CD4-positive, alpha-beta T cell (primary cell): ENCODE measurements at regions of chr13 and their contacts with region 1.

Region 1: GRCh38 chr13:21176220-21176982 is at the starts of genes MRPL57 and SKA3:
- DNase-seq: peak; percentile 87 to 98 (median 92)
- ATAC-seq: peak; percentile 98
- H3K4me3 ChIP-seq: peak within 1 kb of the TSS; percentile 100
- H3K4me3 Mint-ChIP-seq: peak within 1 kb of the TSS; percentile 90
- H3K27ac ChIP-seq: peak within 1 kb of the TSS; percentile 83 to 95
- H3K27ac Mint-ChIP-seq: peak within 1 kb of the TSS; percentile 96
- H3K4me1 ChIP-seq: peaks cover 22% of the 10 kb centered on the region
- H3K4me1 Mint-ChIP-seq: peaks cover 29% of the 10 kb centered on the region
- H3K27me3 ChIP-seq: no peaks in the 10 kb centered on the region
- H3K27me3 Mint-ChIP-seq: no peaks in the 10 kb centered on the region
- CTCF ChIP-seq: no peak
- total RNA-seq, gene MRPL57: 10.0 to 10.5 TPM
- total RNA-seq, gene SKA3: 0.30 TPM in 1 of 2 experiments, not detected in the other

Region 2: DNA sequence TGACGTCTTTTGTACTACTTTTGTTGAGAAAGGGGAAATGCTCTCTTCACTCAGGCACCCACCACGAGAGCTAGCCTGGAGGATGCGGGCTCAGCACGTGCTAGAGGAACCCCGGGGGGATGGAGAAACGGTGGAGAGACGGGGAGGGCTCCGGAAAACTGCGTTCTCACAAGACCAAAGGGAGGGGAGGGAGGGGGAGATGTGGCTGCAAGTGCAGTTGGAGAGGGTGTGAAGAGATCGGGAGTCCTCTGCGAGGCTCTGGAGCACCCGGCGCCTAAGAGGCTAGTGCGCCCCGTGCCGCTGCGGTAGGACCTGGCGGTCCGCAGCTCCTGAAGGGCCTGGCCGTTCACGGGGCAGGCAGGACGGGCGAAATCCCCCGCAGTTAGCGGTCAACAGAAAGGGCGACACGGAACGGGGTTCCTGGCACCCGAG is 230.4 kb before region 1 on chr13:
- CTCF ChIA-PET with region 1: no interaction called
- POLR2A ChIA-PET with region 1: no interaction called
- intact Hi-C with region 1: loop called (anchors 5 to 10 kb)
- DNase-seq: peak in 2 of 14 experiments; percentile 23
- ATAC-seq: peak; percentile 26
- H3K4me3 ChIP-seq: no peak overlapping the region
- H3K4me3 Mint-ChIP-seq: peak overlapping the region; percentile 65
- H3K27ac ChIP-seq: no peak overlapping the region
- H3K27ac Mint-ChIP-seq: no peak overlapping the region
- H3K4me1 ChIP-seq: peaks cover 7% of the 10 kb centered on the region
- H3K4me1 Mint-ChIP-seq: peaks cover 10% of the 10 kb centered on the region
- H3K27me3 ChIP-seq: peaks cover 5 to 10% of the 10 kb centered on the region in 2 experiments
- H3K27me3 Mint-ChIP-seq: peaks cover 62% of the 10 kb centered on the region
- CTCF ChIP-seq: no peak

Region 3: DNA sequence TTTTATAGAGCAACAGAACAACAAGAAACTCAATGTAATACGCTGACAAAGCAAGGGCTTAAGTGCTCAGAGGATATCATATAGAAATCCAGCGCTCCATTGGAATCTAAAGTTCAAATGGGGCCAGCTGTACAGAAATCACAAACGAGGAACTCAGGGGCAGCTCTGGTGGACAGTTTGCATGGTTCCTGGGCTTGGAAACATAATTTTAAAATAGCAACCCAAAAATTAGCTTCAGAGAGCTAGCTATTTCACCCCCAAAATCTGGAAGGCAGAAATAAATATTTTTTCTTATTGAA is 95.9 kb before region 1 on chr13:
- CTCF ChIA-PET with region 1: no interaction called
- POLR2A ChIA-PET with region 1: no interaction called
- intact Hi-C with region 1: no loop called
- DNase-seq: no peak
- ATAC-seq: no peak
- H3K4me3 ChIP-seq: no peak overlapping the region
- H3K4me3 Mint-ChIP-seq: no peak overlapping the region
- H3K27ac ChIP-seq: no peak overlapping the region
- H3K27ac Mint-ChIP-seq: no peak overlapping the region
- H3K4me1 ChIP-seq: peaks cover 5% of the 10 kb centered on the region
- H3K4me1 Mint-ChIP-seq: no peaks in the 10 kb centered on the region
- H3K27me3 ChIP-seq: peaks cover 0 to 5% of the 10 kb centered on the region in 2 experiments
- H3K27me3 Mint-ChIP-seq: peaks cover 5% of the 10 kb centered on the region
- CTCF ChIP-seq: no peak

Region 4: DNA sequence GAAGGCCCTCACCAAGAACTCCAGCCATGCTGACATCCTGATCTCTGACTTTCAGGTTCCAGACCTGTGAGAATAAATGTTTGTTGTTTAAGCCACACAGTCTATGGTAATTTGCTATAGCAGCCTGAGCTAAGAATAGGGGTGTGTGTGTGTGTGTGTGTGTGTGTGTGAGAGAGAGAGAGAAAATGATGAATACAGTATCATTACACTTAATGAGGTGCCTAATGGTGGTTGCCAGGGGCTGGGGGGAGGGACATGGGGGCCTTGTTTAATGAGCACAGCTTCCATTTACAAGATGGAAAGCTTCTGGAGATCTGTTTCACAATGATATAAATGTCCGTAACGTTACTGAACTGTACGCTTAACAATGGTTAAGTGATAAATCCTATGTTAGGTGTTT is 61.2 kb before region 1 on chr13:
- CTCF ChIA-PET with region 1: no interaction called
- POLR2A ChIA-PET with region 1: no interaction called
- intact Hi-C with region 1: loop called in 1 of 2 experiments (anchors 2 kb)
- DNase-seq: no peak
- ATAC-seq: no peak
- H3K4me3 ChIP-seq: no peak overlapping the region
- H3K4me3 Mint-ChIP-seq: no peak overlapping the region
- H3K27ac ChIP-seq: no peak overlapping the region
- H3K27ac Mint-ChIP-seq: no peak overlapping the region
- H3K4me1 ChIP-seq: peaks cover 4% of the 10 kb centered on the region
- H3K4me1 Mint-ChIP-seq: no peaks in the 10 kb centered on the region
- H3K27me3 ChIP-seq: no peaks in the 10 kb centered on the region
- H3K27me3 Mint-ChIP-seq: no peaks in the 10 kb centered on the region
- CTCF ChIP-seq: no peak

Region 5: GRCh38 chr13:21137696-21138095 is 38.7 kb before region 1 on chr13:
- CTCF ChIA-PET with region 1: no interaction called
- POLR2A ChIA-PET with region 1: no interaction called
- intact Hi-C with region 1: loop called in 1 of 2 experiments (anchors 1 kb)
- DNase-seq: peak in 1 of 14 experiments; percentile 18
- ATAC-seq: no peak
- H3K4me3 ChIP-seq: no peak overlapping the region
- H3K4me3 Mint-ChIP-seq: no peak overlapping the region
- H3K27ac ChIP-seq: no peak overlapping the region
- H3K27ac Mint-ChIP-seq: no peak overlapping the region
- H3K4me1 ChIP-seq: peaks cover 19% of the 10 kb centered on the region
- H3K4me1 Mint-ChIP-seq: peaks cover 27% of the 10 kb centered on the region
- H3K27me3 ChIP-seq: peaks cover 0 to 2% of the 10 kb centered on the region in 2 experiments
- H3K27me3 Mint-ChIP-seq: peaks cover 20% of the 10 kb centered on the region
- CTCF ChIP-seq: no peak

Region 6: GRCh38 chr13:21458813-21459701 is 282.7 kb after region 1 on chr13 and contains the start of gene ZDHHC20:
- CTCF ChIA-PET with region 1: no interaction called
- POLR2A ChIA-PET with region 1: interaction called, 22 read pairs
- intact Hi-C with region 1: loop called in 1 of 2 experiments (anchors 2 kb)
- DNase-seq: peak; percentile 75 to 95 (median 88)
- ATAC-seq: peak; percentile 85
- H3K4me3 ChIP-seq: peak within 1 kb of the TSS; percentile 90
- H3K4me3 Mint-ChIP-seq: peak within 1 kb of the TSS; percentile 97
- H3K27ac ChIP-seq: peak within 1 kb of the TSS; percentile 56 to 84
- H3K27ac Mint-ChIP-seq: peak within 1 kb of the TSS; percentile 92
- H3K4me1 ChIP-seq: peaks cover 12% of the 10 kb centered on the region
- H3K4me1 Mint-ChIP-seq: peaks cover 42% of the 10 kb centered on the region
- H3K27me3 ChIP-seq: no peaks in the 10 kb centered on the region
- H3K27me3 Mint-ChIP-seq: no peaks in the 10 kb centered on the region
- CTCF ChIP-seq: no peak
- total RNA-seq, gene ZDHHC20: 62.8 to 65.1 TPM

Region 7: DNA sequence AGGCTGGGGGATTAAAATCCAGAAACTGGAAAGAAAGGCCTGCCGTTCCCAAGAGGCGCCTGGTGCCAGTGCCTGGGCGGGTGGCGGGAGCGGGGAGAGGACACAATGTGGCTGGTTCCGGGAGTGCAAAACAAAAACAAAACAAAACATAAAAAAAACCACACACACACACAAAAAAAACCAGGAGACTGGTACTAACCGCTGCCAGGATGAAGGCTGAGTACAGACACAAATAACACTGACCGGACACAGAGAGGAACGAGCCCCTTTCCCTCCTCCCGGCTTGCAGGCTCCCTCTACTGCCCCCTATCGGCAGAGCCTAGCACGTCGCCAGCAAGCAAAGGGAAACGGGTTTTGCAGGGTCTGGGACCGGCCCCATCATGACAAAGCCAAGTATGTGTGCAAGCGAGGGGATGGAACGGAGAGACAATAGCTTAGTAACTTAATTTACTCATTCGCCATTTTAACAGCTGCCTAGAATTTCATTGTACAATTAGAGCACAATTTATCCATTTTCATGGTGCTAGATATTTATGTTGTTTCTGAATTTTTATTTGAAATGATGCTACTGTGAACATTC is 300.6 kb after region 1 on chr13:
- CTCF ChIA-PET with region 1: interaction called, 5 read pairs
- POLR2A ChIA-PET with region 1: no interaction called
- intact Hi-C with region 1: loop called (anchors 2 to 5 kb)
- DNase-seq: peak; percentile 64 to 89 (median 72)
- ATAC-seq: peak; percentile 80
- H3K4me3 ChIP-seq: peak overlapping the region; percentile 37
- H3K4me3 Mint-ChIP-seq: peak overlapping the region; percentile 78
- H3K27ac ChIP-seq: no peak overlapping the region
- H3K27ac Mint-ChIP-seq: no peak overlapping the region
- H3K4me1 ChIP-seq: peaks cover 6% of the 10 kb centered on the region
- H3K4me1 Mint-ChIP-seq: peaks cover 17% of the 10 kb centered on the region
- H3K27me3 ChIP-seq: no peaks in the 10 kb centered on the region
- H3K27me3 Mint-ChIP-seq: peaks cover 10% of the 10 kb centered on the region
- CTCF ChIP-seq: peak; percentile 97